ENCODE measurements at regions of chr5 and their contacts with region 1.

Region 1: GRCh38 chr5:150846654-150847333 is 473 bp downstream of the IRGM start:
- DNase-seq: peak; percentile 88
- ATAC-seq: peak; percentile 97
- H3K4me3 ChIP-seq: no peak overlapping the region
- H3K27ac ChIP-seq: no peak overlapping the region
- H3K4me1 ChIP-seq: no peaks in the 10 kb centered on the region
- H3K27me3 ChIP-seq: peaks cover 12% of the 10 kb centered on the region
- CTCF ChIP-seq: peak; percentile 83
- POLR2A ChIP-seq: 0 out of 2 replicates have a peak, but pooled peaks have one; percentile 26
- RAD21 ChIP-seq: peak; percentile 84

Region 2: GRCh38 chr5:150656191-150657132 is 190.3 kb before region 1 on chr5:
- CTCF ChIA-PET with region 1: no interaction called
- POLR2A ChIA-PET with region 1: no interaction called
- dilution Hi-C with region 1: no loop called
- in situ Hi-C with region 1: no loop called
- intact Hi-C with region 1: loop called (anchors 5 kb)
- DNase-seq: no peak
- ATAC-seq: peak; percentile 40
- H3K4me3 ChIP-seq: peak overlapping the region; percentile 59
- H3K27ac ChIP-seq: peak overlapping the region; percentile 56; the same call in 1 of the 2 replicates
- H3K4me1 ChIP-seq: peaks cover 40% of the 10 kb centered on the region
- H3K27me3 ChIP-seq: no peaks in the 10 kb centered on the region; the same call in 1 of the 2 replicates
- CTCF ChIP-seq: peak; percentile 65
- POLR2A ChIP-seq: no peak
- RAD21 ChIP-seq: peak; percentile 72

Region 3: GRCh38 chr5:150689120-150689519 is 157.7 kb before region 1 on chr5:
- CTCF ChIA-PET with region 1: no interaction called
- POLR2A ChIA-PET with region 1: no interaction called
- dilution Hi-C with region 1: no loop called
- in situ Hi-C with region 1: no loop called
- intact Hi-C with region 1: no loop called
- DNase-seq: no peak
- ATAC-seq: no peak
- H3K4me3 ChIP-seq: no peak overlapping the region
- H3K27ac ChIP-seq: no peak overlapping the region
- H3K4me1 ChIP-seq: no peaks in the 10 kb centered on the region
- H3K27me3 ChIP-seq: no peaks in the 10 kb centered on the region
- CTCF ChIP-seq: no peak
- POLR2A ChIP-seq: no peak
- RAD21 ChIP-seq: no peak

Region 4: GRCh38 chr5:150700594-150701293 is 146.1 kb before region 1 on chr5 and contains the start of gene RBM22:
- CTCF ChIA-PET with region 1: interaction called, 3 read pairs
- POLR2A ChIA-PET with region 1: interaction called, 3 read pairs
- dilution Hi-C with region 1: no loop called
- in situ Hi-C with region 1: no loop called
- intact Hi-C with region 1: loop called (anchors 1 kb)
- DNase-seq: peak; percentile 83
- ATAC-seq: peak; percentile 98
- H3K4me3 ChIP-seq: peak within 1 kb of the TSS; percentile 81
- H3K27ac ChIP-seq: peak within 1 kb of the TSS; percentile 94
- H3K4me1 ChIP-seq: peaks cover 3% of the 10 kb centered on the region
- H3K27me3 ChIP-seq: no peaks in the 10 kb centered on the region
- CTCF ChIP-seq: peak; percentile 60
- POLR2A ChIP-seq: peak; percentile 80
- RAD21 ChIP-seq: peak; percentile 10; the same call in 1 of the 2 replicates
- total RNA-seq, gene RBM22: 26.2 and 33.1 TPM in 2 replicates

Region 5: DNA sequence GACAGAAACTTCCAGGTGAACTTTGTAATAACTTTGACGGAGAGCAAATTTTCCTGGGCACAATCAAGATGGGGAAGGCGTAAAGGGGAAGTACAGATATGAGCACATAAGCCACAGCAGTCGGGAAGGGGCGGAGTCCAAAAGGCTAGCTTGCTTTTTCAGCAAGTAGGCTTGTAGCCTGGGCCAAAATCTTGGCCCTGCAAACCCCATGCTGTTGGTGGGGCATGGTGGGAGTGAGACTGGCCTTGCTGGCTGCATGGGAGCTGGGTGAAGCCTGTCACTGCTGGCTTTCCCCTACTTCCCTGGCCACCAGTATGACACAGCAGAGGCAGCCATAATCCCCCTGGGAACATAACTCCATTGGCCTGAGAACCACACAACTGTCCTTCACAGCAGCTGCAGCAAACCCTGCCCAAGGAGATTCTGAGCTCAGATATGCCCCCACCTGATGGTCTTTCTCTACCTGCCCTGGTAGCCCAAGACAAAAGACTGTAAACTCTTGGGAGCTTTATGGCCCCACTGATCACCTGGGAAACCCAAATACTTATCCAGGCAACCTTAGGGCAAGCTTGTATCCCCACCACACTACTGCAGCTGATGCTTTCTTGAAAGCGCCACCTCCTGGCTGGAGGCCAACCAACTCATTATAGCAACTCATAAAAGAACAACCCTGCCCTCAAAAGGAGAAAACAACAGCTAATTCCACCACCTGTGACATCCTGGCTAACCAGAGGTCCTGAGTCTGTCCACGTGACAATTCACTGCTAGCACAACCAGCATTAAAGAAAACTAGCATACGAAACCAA is 112.0 kb before region 1 on chr5:
- CTCF ChIA-PET with region 1: no interaction called
- POLR2A ChIA-PET with region 1: no interaction called
- dilution Hi-C with region 1: no loop called
- in situ Hi-C with region 1: no loop called
- intact Hi-C with region 1: loop called (anchors 5 kb)
- DNase-seq: no peak
- ATAC-seq: no peak
- H3K4me3 ChIP-seq: no peak overlapping the region
- H3K27ac ChIP-seq: no peak overlapping the region
- H3K4me1 ChIP-seq: no peaks in the 10 kb centered on the region
- H3K27me3 ChIP-seq: no peaks in the 10 kb centered on the region
- CTCF ChIP-seq: no peak
- POLR2A ChIP-seq: no peak
- RAD21 ChIP-seq: no peak